ENCODE measurements at regions of chr7 and their contacts with region 1.

Region 1: GRCh38 chr7:50212666-50213621 is 91.6 kb upstream of the IKZF1 start:
- DNase-seq: peak in 5 of 9 donors; percentile 24 to 49 (median 41)
- ATAC-seq: peak; percentile 63
- H3K4me3 ChIP-seq: no peak overlapping the region
- H3K4me3 Mint-ChIP-seq: peak overlapping the region; percentile 44 to 89 (median 68)
- H3K27ac ChIP-seq: no peak overlapping the region
- H3K27ac Mint-ChIP-seq: peak overlapping the region; percentile 26 to 94 (median 83)
- H3K4me1 ChIP-seq: peaks cover 17 to 86% of the 10 kb centered on the region in 2 donors
- H3K4me1 Mint-ChIP-seq: peaks cover 69 to 100% (median 98%) of the 10 kb centered on the region in 7 donors
- H3K27me3 ChIP-seq: no peaks in the 10 kb centered on the region
- H3K27me3 Mint-ChIP-seq: no peaks in the 10 kb centered on the region

Region 2: GRCh38 chr7:50251765-50252164 is 38.8 kb after region 1 on chr7:
- CTCF ChIA-PET with region 1: no interaction called
- POLR2A ChIA-PET with region 1: interaction called, 6 read pairs
- intact Hi-C with region 1: loop called in 1 of 2 experiments (anchors 2 kb)
- DNase-seq: no peak
- ATAC-seq: no peak
- H3K4me3 ChIP-seq: no peak overlapping the region
- H3K4me3 Mint-ChIP-seq: no peak overlapping the region
- H3K27ac ChIP-seq: no peak overlapping the region
- H3K27ac Mint-ChIP-seq: peak overlapping the region in 5 of 9 donors; percentile 4 to 60 (median 32)
- H3K4me1 ChIP-seq: no peaks in the 10 kb centered on the region
- H3K4me1 Mint-ChIP-seq: peaks cover 5 to 59% (median 42%) of the 10 kb centered on the region in 7 donors
- H3K27me3 ChIP-seq: no peaks in the 10 kb centered on the region
- H3K27me3 Mint-ChIP-seq: no peaks in the 10 kb centered on the region

Region 3: DNA sequence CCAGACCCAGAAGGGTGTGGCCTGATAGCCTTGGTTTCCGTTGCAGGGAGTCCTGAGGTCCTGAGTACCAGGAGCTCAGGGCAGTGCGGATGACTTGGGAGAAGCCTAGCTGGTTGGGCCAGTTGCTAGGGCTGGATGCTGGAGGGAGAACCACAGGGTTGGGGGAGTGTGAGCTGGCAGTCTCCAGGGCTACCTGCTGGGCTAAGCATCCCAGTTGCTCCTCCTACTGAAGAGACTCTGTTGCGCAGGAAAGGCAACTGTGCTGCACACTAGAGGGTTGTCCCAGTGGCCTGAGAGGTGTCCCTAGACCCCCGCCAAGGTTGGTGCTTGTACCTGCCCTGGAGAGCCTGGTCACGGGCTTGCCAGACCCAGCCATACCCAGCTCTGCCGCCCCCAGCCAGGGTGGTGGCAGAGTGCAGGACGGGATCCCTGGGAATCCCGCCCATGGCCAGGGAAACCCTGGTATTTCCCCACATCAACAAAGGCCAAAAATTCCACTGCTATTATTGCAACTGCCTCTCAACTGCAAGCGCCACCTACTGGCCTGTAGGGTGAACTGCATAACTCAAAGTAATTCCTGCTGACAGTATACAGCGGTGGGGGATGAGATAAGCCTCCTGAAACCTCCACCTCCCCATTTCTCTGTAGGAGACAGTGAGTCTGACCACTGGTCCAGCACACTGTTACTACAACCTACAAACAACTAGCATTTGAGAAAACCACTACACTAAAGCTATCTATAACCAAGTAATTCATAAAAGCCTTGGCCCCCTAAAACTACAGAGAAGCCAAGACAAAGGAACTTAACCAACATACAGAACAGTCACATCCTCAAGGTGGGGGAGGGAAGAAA is 419.8 kb after region 1 on chr7:
- CTCF ChIA-PET with region 1: no interaction called
- POLR2A ChIA-PET with region 1: no interaction called
- intact Hi-C with region 1: no loop called
- DNase-seq: peak; percentile 27 to 64 (median 52)
- ATAC-seq: peak; percentile 88
- H3K4me3 ChIP-seq: no peak overlapping the region
- H3K4me3 Mint-ChIP-seq: no peak overlapping the region
- H3K27ac ChIP-seq: no peak overlapping the region
- H3K27ac Mint-ChIP-seq: peak overlapping the region in 1 of 9 donors; percentile 29
- H3K4me1 ChIP-seq: no peaks in the 10 kb centered on the region
- H3K4me1 Mint-ChIP-seq: peaks cover 0 to 6% (median 0%) of the 10 kb centered on the region in 7 donors
- H3K27me3 ChIP-seq: no peaks in the 10 kb centered on the region
- H3K27me3 Mint-ChIP-seq: peaks cover 0 to 37% (median 0%) of the 10 kb centered on the region in 5 donors

Measured in naive thymus-derived CD4-positive, alpha-beta T cell (primary cell).